Gastrocnemius medialis (tissue), 4 donors: ENCODE measurements at regions of chr1 and their contacts with region 1.

Region 1: DNA sequence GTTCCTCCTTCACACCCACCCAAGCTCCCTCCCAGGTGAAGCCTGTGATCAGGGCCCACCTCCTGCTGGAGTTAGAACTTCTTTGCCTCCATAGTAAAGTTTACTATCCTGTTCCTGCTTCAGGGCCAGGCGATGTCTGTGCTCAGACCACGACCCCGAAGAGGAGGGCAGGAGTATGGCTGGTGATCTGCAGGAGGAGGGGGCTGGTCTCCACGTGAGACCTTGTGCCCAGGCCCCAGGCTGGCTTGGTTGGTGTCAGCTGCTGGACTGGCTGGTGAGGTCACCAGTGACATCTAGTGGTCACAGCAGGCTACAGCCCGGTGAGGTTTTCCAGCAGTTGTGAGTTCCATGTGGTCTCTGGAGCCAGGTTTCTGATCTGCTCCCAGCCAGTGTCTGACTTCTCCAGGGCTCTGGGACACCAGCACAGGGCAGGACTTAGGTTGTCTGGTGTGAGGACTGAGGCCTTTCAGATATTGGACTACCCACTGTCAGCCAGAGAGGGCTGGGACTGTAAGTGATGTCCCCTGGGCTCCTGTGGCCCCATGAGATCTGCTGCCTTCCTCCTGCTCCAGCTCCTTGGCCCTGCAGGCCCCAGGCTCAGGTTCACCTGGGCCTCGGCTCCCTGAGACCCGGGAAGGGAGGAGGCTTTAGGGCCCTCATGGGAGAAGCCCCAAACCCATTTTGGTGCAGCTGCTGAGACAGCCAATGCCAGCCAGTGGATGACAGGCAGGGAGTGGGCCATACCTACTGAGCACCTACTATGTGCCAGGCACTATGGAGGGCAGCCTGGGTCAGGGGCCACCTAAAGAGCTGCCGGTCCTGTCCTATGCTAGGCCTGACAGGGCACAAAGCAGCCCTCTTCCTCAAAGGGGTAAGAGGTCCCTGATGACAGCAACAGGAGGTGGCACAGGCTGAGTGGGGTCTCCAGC is 6.0 kb upstream of the UBL4B start:
- DNase-seq: peak; percentile 33 to 55
- ATAC-seq: peak; percentile 83 to 87
- H3K4me3 ChIP-seq: no peak overlapping the region
- H3K27ac ChIP-seq: no peak overlapping the region
- H3K4me1 ChIP-seq: no peaks in the 10 kb centered on the region
- H3K27me3 ChIP-seq: peaks cover 0 to 5% (median 0%) of the 10 kb centered on the region in 3 donors
- CTCF ChIP-seq: peak; percentile 71 to 95 (median 82)
- POLR2A ChIP-seq: no peak

Region 2: GRCh38 chr1:110034451-110035235 is 71.6 kb before region 1 on chr1 and contains the start of gene STRIP1:
- in situ Hi-C with region 1: no loop called
- intact Hi-C with region 1: loop called (anchors 1 kb)
- DNase-seq: peak; percentile 87 to 92
- ATAC-seq: peak; percentile 98 to 99
- H3K4me3 ChIP-seq: peak within 1 kb of the TSS; percentile 80 to 97 (median 83)
- H3K27ac ChIP-seq: peak within 1 kb of the TSS; percentile 85 to 95 (median 90)
- H3K4me1 ChIP-seq: peaks cover 14 to 20% of the 10 kb centered on the region in 2 donors
- H3K27me3 ChIP-seq: no peaks in the 10 kb centered on the region
- CTCF ChIP-seq: no peak
- POLR2A ChIP-seq: peak; percentile 49 to 69
- total RNA-seq, gene STRIP1: 17.9 to 31.4 (median 20.7) TPM

Region 3: DNA sequence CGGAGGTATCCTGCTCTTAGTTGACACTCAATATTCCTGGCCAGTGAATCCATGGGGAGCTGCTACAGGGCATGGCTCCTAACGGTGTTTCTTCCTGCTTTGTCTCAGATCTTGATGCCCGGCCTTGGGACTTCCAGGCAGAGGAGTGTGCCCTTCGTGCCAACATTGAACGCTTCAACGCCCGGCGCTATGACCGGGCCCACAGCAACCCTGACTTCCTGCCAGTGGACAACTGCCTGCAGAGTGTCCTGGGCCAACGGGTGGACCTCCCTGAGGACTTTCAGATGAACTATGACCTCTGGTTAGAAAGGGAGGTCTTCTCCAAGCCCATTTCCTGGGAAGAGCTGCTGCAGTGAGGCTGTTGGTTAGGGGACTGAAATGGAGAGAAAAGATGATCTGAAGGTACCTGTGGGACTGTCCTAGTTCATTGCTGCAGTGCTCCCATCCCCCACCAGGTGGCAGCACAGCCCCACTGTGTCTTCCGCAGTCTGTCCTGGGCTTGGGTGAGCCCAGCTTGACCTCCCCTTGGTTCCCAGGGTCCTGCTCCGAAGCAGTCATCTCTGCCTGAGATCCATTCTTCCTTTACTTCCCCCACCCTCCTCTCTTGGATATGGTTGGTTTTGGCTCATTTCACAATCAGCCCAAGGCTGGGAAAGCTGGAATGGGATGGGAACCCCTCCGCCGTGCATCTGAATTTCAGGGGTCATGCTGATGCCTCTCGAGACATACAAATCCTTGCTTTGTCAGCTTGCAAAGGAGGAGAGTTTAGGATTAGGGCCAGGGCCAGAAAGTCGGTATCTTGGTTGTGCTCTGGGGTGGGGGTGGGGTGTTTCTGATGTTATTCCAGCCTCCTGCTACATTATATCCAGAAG is 52.5 kb before region 1 on chr1:
- in situ Hi-C with region 1: loop called (anchors 5 to 10 kb)
- intact Hi-C with region 1: loop called (anchors 1 kb)
- DNase-seq: peak in 1 of 2 donors; percentile 46
- ATAC-seq: peak; percentile 57 to 68
- H3K4me3 ChIP-seq: no peak overlapping the region
- H3K27ac ChIP-seq: no peak overlapping the region
- H3K4me1 ChIP-seq: peaks cover 4 to 19% of the 10 kb centered on the region in 2 donors
- H3K27me3 ChIP-seq: no peaks in the 10 kb centered on the region
- CTCF ChIP-seq: peak; percentile 78 to 95 (median 86)
- POLR2A ChIP-seq: no peak

Region 4: GRCh38 chr1:110210604-110211495 is 104.6 kb after region 1 on chr1:
- in situ Hi-C with region 1: no loop called
- intact Hi-C with region 1: no loop called
- DNase-seq: no peak
- ATAC-seq: peak; percentile 25 to 27
- H3K4me3 ChIP-seq: peak overlapping the region; percentile 57 to 88 (median 68)
- H3K27ac ChIP-seq: peak overlapping the region; percentile 75 to 85 (median 84)
- H3K4me1 ChIP-seq: peaks cover 5 to 7% of the 10 kb centered on the region in 2 donors
- H3K27me3 ChIP-seq: peaks cover 7 to 17% (median 14%) of the 10 kb centered on the region in 3 donors
- CTCF ChIP-seq: no peak
- POLR2A ChIP-seq: no peak